Ovary (tissue), 10 donors: ENCODE measurements at regions of chr3 and their contacts with region 1.

Region 1: GRCh38 chr3:138118612-138119422 is 3.4 kb upstream of the DZIP1L start:
- DNase-seq: peak; percentile 65 to 84 (median 81)
- H3K4me3 ChIP-seq: no peak overlapping the region
- H3K27ac ChIP-seq: no peak overlapping the region
- H3K4me1 ChIP-seq: peaks cover 2% of the 10 kb centered on the region
- H3K27me3 ChIP-seq: no peaks in the 10 kb centered on the region
- CTCF ChIP-seq: peak; percentile 50 to 70 (median 67)
- EP300 ChIP-seq: no peak
- POLR2A ChIP-seq: no peak

Region 2: DNA sequence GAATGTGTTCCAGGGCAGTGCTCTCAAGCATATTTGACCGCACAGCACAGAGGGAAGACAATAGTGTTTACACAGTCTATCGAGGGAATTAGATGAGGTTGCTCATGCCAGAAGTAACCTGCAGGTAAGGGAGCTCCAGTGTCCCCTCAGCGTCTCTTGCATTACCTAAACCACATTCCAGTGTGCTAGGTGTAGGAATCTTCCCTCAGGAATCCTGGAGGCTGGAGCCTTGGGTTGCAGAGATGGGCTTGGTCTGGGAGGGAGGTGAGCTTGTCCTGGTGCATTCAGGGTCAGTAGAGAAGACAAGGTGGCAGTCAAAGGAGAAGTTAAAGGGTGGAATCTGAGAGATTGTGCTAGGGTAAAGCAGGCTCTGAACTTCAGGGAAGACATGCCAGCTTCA is 298.5 kb before region 1 on chr3:
- intact Hi-C with region 1: no loop called
- DNase-seq: no peak
- H3K4me3 ChIP-seq: no peak overlapping the region
- H3K27ac ChIP-seq: no peak overlapping the region
- H3K4me1 ChIP-seq: no peaks in the 10 kb centered on the region
- H3K27me3 ChIP-seq: no peaks in the 10 kb centered on the region
- CTCF ChIP-seq: no peak
- EP300 ChIP-seq: no peak
- POLR2A ChIP-seq: no peak

Region 3: GRCh38 chr3:138068579-138069174 is 50.1 kb before region 1 on chr3:
- intact Hi-C with region 1: loop called (anchors 2 to 5 kb)
- DNase-seq: peak; percentile 77 to 88 (median 86)
- H3K4me3 ChIP-seq: no peak overlapping the region
- H3K27ac ChIP-seq: no peak overlapping the region
- H3K4me1 ChIP-seq: no peaks in the 10 kb centered on the region
- H3K27me3 ChIP-seq: no peaks in the 10 kb centered on the region
- CTCF ChIP-seq: peak; percentile 75 to 94 (median 89)
- EP300 ChIP-seq: no peak
- POLR2A ChIP-seq: no peak